Activated CD8-positive, alpha-beta T cell treated with anti-CD3 and anti-CD28 coated beads, Interleukin-2, amount 10 ng/mL, durations not matched to agents 7 days and 5 days (primary cell): ENCODE measurements at regions of chr6 and their contacts with region 1.

Region 1: GRCh38 chr6:89371849-89372505 is 19.5 kb upstream of the UBE2J1 start:
- DNase-seq: peak; percentile 87
- ATAC-seq: peak; percentile 81
- H3K4me3 Mint-ChIP-seq: peak overlapping the region; percentile 5
- H3K27ac Mint-ChIP-seq: peak overlapping the region; percentile 61
- H3K4me1 Mint-ChIP-seq: peaks cover 41% of the 10 kb centered on the region
- H3K27me3 Mint-ChIP-seq: peaks cover 8% of the 10 kb centered on the region

Region 2: DNA sequence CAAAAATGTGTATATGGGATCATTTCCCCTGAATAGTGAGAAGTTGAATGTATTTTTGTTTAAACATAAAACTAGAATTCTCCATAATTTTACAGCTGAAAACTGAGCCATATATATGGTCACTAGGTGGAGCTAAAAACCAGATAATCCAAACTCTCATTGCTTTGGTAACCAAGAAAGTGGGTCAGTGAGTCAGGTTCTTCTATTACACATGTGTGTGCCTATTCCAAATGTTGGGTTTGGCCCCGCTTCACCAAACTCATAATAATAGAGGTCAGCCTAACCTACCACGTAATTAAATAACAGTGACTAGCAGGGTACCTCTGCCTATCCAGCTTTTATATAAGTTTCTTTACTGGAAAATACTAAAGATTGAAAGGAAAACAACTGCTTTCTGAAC is 389.3 kb before region 1 on chr6:
- CTCF ChIA-PET with region 1: interaction called, 31 read pairs
- POLR2A ChIA-PET with region 1: no interaction called
- DNase-seq: no peak
- ATAC-seq: peak; percentile 74
- H3K4me3 Mint-ChIP-seq: no peak overlapping the region
- H3K27ac Mint-ChIP-seq: no peak overlapping the region
- H3K4me1 Mint-ChIP-seq: peaks cover 2% of the 10 kb centered on the region
- H3K27me3 Mint-ChIP-seq: peaks cover 9% of the 10 kb centered on the region

Region 3: DNA sequence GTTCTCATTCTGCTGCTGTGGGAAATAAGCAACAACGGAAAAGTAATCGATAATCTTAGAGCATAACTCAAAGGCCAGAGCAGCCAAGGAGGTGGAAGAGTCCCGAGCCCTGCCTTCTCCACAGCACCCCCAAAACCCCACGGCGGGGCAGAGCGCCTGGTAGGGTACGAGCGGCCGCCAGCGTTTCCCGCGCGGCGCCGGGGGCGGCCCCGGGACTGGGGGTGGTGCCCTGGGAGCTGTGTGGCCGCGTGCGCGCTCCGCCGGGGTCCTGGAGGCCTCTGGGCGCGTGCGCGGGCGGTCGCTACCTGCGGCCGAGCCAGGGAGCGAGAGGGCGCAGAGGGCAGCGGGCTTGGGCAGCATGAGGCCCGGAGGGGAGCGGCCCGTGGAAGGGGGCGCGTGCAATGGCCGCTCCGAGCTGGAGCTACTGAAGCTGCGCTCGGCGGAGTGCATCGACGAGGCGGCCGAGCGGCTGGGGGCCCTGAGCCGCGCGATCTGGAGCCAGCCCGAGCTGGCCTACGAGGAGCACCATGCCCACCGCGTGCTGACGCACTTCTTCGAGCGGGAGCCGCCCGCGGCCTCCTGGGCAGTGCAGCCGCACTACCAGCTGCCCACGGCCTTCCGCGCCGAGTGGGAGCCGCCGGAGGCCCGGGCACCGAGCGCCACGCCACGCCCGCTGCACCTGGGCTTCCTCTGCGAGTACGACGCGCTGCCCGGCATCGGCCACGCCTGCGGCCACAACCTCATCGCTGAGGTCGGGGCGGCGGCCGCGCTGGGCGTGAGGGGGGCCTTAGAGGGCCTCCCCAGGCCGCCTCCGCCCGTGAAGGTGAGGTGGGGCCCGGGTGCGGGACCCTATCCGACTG is 226.0 kb before region 1 on chr6 and contains the start of gene PM20D2:
- CTCF ChIA-PET with region 1: interaction called, 15 read pairs
- POLR2A ChIA-PET with region 1: interaction called, 4 read pairs
- DNase-seq: peak; percentile 78
- ATAC-seq: peak; percentile 87
- H3K4me3 Mint-ChIP-seq: peak within 1 kb of the TSS; percentile 88
- H3K27ac Mint-ChIP-seq: peak within 1 kb of the TSS; percentile 96
- H3K4me1 Mint-ChIP-seq: peaks cover 38% of the 10 kb centered on the region
- H3K27me3 Mint-ChIP-seq: no peaks in the 10 kb centered on the region
- total RNA-seq, gene PM20D2: 22.5 to 24.5 TPM

Region 4: DNA sequence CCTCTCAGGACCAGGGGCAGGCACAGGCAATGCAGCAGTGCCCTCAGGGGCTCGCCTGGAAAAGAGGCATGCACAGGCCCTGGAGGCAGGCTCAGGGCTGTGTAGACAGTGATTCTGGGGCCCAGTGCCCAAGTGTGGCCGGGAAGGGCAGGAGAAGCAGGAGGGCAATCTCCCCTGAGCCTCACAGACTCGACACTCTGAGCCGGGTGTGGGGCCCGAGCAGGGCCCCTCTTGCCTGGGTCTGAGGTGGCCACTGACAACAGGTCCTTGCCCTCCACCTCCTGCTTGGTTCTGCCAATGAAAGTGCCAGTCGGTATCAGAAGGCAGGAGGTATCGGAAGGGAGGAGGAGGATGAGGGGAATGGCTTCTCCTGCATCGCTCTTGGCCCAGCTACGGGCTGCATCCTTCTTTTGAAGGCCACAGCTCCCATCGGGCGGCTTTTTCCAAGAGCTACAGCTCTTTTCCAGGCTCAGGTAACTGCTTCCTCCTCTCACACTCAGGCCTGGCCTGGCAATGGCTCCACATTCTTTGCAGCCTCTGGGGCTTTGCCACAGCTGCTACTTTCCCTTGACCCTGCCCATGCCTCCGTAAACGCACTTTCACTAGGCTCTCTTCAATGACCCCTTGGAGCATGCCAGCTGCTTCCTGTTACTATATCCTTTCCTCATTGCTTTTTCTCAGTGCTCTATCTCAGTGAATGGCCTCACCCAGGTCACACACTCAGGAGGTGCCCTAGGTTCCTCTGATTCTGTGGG is 81.4 kb before region 1 on chr6:
- CTCF ChIA-PET with region 1: interaction called, 10 read pairs
- POLR2A ChIA-PET with region 1: no interaction called
- DNase-seq: no peak
- ATAC-seq: no peak
- H3K4me3 Mint-ChIP-seq: no peak overlapping the region
- H3K27ac Mint-ChIP-seq: no peak overlapping the region
- H3K4me1 Mint-ChIP-seq: peaks cover 3% of the 10 kb centered on the region
- H3K27me3 Mint-ChIP-seq: no peaks in the 10 kb centered on the region

Region 5: DNA sequence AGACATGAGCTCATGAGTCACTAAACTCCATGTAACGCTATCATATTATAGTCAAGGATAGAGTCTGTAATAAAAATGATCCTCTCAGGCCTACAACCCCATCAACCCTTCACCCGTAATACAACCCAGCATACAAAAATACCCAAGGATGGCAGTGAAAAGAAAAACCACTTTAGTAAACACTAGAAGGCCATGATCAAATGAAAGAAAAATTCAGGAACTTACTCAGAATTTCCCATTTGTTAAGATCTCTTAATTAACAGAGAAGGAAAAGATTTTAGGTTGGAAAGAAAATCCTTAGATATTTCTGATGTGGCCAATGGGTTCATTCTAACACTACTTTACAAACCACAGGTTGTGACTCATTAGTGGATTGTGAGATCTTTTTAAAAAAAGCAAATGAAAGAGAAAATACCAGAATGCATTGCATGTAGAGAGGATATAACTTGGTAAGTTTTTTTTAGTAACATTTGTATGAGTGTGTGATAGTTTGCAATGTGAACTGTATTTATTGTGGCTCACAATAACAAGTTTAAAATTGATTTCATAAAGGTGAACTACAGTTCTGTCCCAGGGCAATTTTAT is 11.5 kb before region 1 on chr6:
- CTCF ChIA-PET with region 1: interaction called, 135 read pairs
- POLR2A ChIA-PET with region 1: interaction called, 6 read pairs
- DNase-seq: no peak
- ATAC-seq: peak; percentile 62
- H3K4me3 Mint-ChIP-seq: peak overlapping the region; percentile 0
- H3K27ac Mint-ChIP-seq: peak overlapping the region; percentile 24
- H3K4me1 Mint-ChIP-seq: peaks cover 69% of the 10 kb centered on the region
- H3K27me3 Mint-ChIP-seq: no peaks in the 10 kb centered on the region

Region 6: DNA sequence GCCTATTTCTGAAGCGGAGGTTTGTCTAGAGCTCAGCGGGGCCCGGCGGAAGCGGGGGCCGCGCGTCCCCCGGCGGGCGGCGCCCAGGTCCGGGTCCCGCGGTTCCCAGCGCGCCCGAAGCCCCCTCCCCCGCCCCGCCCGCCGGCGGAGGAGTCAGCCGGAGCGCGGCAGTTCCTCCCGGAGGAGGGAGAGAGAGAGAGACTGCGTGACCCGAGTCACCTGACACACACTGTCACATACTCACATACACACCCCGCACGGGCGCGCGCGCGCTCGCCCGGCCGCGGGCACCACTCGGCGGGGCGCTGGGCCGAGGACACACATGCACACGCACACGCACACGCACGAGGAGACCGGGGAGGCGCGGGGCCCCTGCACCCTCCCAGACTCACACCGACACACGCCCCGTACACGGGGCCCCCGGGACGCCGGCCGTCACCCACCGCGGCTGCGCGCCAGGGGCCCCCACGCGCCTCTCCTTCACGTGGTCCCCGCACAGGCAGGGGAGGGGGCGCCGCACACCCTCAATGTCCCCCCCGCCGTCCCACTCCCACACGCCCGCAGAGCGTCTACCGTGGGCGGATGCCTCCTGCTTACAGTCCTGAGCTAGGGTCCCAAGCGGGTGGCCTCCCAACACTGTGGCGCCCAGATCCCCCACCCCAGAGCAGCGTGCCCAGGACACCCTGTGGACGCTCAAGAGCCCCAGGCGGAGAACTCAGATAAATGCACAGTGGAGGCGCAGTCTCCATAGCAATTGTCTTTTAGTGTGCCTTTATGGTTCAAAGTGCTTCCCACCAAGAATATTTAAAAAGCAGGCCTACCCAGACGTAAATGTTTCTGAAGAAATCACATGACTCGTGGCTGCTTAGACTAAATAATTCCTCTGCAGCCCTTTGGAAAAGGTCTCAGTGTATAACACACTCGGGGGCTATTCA is 40.4 kb after region 1 on chr6 and contains the start of gene RRAGD:
- CTCF ChIA-PET with region 1: interaction called, 19 read pairs
- POLR2A ChIA-PET with region 1: interaction called, 5 read pairs
- DNase-seq: peak; percentile 66
- ATAC-seq: peak; percentile 84
- H3K4me3 Mint-ChIP-seq: peak within 1 kb of the TSS; percentile 82
- H3K27ac Mint-ChIP-seq: peak within 1 kb of the TSS; percentile 72
- H3K4me1 Mint-ChIP-seq: peaks cover 14% of the 10 kb centered on the region
- H3K27me3 Mint-ChIP-seq: peaks cover 61% of the 10 kb centered on the region
- total RNA-seq, gene RRAGD: 2.5 to 3.7 TPM

Region 7: GRCh38 chr6:89610149-89610642 is 238.2 kb after region 1 on chr6:
- CTCF ChIA-PET with region 1: interaction called, 27 read pairs
- POLR2A ChIA-PET with region 1: no interaction called
- DNase-seq: peak; percentile 85
- ATAC-seq: peak; percentile 88
- H3K4me3 Mint-ChIP-seq: no peak overlapping the region
- H3K27ac Mint-ChIP-seq: no peak overlapping the region
- H3K4me1 Mint-ChIP-seq: peaks cover 24% of the 10 kb centered on the region
- H3K27me3 Mint-ChIP-seq: no peaks in the 10 kb centered on the region